AG04449 (cell line): ENCODE measurements at regions of chr21 and their contacts with region 1.

Region 1: DNA sequence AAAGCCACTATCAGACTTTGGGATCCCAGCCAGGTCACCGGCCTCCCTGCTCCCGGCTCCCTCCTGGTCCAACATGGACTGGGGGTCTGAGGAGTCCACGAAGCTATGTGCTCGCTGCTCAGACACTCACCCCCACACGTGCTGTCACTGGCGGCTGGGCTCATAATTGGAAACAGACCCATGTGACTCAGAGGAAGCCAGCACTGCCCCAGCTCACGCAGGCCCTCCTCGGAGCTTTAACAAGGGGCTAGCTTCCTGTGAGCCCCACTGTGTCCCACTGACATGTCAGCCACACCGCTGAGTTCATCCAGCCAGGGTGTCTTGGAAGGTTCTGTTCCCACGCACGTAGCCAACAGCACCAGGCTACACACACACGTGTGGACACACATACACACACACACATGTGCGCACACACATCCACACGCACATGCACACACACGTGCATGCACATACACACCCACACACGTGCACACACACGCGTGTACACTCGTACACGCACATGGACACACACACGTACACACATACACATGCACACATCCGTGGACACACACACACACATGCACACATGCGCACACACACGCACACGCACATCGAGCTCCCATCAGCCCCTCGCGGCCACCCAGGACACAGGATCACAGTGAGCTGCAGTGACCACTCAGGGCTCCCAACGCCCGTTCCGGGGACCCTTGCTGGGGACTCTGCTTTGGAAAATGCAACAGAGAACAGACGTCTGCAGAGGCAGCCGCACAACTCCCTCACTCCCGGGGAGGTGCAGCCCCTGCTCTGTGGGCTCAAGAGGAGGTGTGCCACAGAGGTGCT is 18.4 kb upstream of the COL6A2 start:
- DNase-seq: peak; percentile 76
- H3K4me3 ChIP-seq: no peak overlapping the region
- CTCF ChIP-seq: no peak

Region 2: DNA sequence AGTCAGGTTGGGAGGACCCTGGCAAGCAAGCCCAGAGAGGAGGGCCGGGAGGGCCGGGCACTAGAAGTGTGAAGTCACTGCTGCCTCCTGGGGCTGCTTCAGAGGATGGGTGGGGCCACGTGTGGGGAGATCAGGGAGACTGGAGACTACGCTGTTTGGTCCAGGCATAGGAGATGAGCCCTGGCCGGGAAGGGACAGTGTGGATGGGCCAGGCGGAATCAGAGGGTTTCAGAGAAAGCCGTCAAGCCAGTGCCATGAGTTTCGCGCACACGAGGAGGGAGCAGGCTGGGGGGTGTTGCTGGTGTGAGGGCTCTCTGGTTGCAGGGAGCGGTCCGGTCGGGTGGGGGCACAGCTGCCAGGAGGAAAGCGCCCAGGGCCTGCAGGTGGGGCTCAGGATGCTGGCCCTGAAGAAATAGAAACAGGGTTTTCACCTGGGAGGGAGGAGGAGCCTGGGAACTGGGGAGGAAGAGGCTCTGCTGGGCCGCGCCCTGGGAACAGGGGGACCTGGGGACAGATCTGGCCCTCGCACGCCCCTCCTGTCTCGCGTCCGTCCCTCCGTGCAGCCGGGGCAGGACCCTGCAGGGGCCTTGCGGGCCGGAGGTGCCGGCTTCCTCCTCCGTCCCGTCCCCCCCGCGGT is 675.4 kb before region 1 on chr21:
- CTCF ChIA-PET with region 1: no interaction called
- POLR2A ChIA-PET with region 1: no interaction called
- DNase-seq: no peak
- H3K4me3 ChIP-seq: peak overlapping the region; percentile 53
- CTCF ChIP-seq: no peak

Region 3: GRCh38 chr21:46060596-46061061 is 18.9 kb before region 1 on chr21:
- CTCF ChIA-PET with region 1: interaction called, 5 read pairs
- POLR2A ChIA-PET with region 1: interaction called, 19 read pairs
- DNase-seq: peak; percentile 99
- H3K4me3 ChIP-seq: no peak overlapping the region
- CTCF ChIP-seq: no peak

Region 4: DNA sequence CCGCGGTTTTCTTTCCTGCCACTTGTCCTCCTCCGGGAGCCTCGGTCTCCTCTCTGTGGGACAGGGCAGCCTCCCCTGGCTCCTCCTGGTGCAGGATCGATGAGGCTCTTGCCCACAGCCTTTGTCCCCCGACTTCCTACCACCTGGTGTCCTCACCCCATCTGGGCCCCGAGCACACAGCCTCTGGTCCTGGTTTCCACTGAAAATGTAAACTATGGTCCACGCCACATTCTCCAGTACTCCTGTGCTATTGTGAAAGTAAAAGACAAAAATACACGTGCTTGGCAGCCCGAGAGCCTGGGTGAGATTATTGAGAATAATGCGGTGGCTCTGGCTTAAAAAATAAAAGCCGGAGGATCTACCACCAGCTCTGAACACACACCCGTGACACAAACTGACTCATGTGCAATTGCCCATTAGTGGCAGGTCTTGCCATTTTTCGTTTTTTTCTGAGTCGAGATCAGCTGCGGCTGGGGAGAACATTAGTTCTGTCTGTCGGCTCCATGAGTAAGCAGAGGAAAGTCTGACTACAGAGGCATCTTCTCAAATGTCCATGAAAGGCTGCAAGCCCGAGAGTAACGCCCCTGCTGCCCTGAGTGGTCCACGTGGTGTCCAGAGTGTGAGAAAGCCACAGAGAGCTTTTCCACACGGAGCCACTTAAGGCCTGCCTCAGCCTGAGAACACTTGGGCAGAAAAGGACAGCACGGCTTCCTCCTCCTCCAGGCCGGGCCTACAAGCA is 12.6 kb after region 1 on chr21:
- CTCF ChIA-PET with region 1: interaction called, 3 read pairs
- POLR2A ChIA-PET with region 1: interaction called, 22 read pairs
- DNase-seq: peak; percentile 95
- H3K4me3 ChIP-seq: peak overlapping the region; percentile 45
- CTCF ChIP-seq: no peak

Region 5: DNA sequence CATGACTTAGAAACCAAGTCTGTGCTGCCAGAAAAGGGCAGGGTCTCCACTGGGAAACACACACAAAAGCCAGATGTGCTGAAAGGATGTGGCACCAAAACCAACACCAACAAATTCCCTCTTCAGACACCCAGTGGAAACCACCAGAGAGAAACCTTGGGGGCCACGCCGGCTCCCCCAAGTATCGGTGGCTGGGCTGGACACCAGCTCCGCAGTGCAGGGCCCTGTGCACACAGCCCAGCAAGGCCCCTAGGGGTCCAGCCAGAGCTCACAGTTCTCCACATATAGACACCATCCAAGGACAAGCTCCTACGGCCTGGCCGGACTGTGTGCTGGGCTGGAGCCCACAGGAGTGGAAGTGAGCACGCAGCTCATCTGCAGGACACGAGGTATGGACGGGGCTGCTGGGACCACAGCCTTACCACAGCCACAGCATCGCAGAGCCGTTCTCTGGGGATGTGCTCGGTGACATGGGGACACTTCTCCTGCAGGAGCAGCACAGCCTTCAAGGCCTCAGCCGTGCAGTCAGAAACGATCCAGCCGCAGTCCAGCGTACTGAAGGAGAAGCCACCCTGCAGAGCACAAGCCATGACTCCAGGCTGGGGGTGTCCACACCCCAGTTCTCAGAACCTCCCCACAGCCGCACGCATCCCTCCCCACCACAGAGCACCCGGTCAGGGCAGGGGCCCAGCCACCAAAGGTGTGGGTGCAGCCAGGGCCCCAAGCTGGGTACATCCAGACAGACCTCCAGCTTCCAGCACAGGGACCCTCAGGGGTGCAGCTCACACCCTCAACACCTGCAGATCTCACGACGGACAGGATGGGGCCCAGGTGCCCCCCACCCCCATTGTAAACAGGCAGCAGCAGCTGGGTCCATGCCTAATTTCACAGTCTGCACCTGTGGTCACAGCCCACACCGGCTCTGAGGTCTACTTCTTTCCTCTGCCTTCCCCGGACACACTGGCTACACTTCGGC is 127.7 kb after region 1 on chr21:
- CTCF ChIA-PET with region 1: no interaction called
- POLR2A ChIA-PET with region 1: no interaction called
- DNase-seq: no peak
- H3K4me3 ChIP-seq: no peak overlapping the region
- CTCF ChIP-seq: no peak